Psoas muscle (tissue), 8 donors: ENCODE measurements at regions of chr13 and their contacts with region 1.

Region 1: GRCh38 chr13:91467236-91467635 is 68.8 kb downstream of the GPC5 start:
- DNase-seq: no peak
- ATAC-seq: no peak
- H3K4me3 ChIP-seq: no peak overlapping the region
- H3K27ac ChIP-seq: no peak overlapping the region
- H3K4me1 ChIP-seq: no peaks in the 10 kb centered on the region
- H3K27me3 ChIP-seq: no peaks in the 10 kb centered on the region
- CTCF ChIP-seq: no peak

Region 2: DNA sequence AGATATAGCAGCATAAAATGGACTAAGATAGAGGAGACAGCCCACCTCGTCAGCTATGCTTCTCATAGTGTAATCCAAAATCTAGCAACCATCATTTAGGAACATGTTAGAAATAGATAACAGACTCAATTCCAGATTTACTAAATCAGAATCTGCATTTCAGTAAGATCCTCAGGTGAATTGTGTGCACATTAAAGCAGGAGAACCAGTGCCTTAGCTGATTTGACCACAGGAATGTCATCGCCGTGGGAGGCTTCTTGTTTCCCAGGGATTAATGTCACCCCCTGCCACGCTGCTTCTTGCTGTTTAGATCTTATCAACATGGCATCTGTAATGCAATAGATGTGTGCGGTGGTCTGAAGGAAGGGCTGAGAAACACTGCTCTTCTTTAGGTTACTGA is 15.2 kb after region 1 on chr13:
- intact Hi-C with region 1: loop called in 1 of 2 experiments (anchors 2 kb)
- DNase-seq: no peak
- ATAC-seq: no peak
- H3K4me3 ChIP-seq: no peak overlapping the region
- H3K27ac ChIP-seq: no peak overlapping the region
- H3K4me1 ChIP-seq: no peaks in the 10 kb centered on the region
- H3K27me3 ChIP-seq: no peaks in the 10 kb centered on the region
- CTCF ChIP-seq: no peak